ENCODE measurements at regions of chr7 and their contacts with region 1.

Region 1: GRCh38 chr7:86469680-86470295 is 173.9 kb upstream of the GRM3 start:
- DNase-seq: peak in 1 of 2 donors; percentile 19
- ATAC-seq: no peak
- H3K4me3 ChIP-seq: no peak overlapping the region
- H3K27ac ChIP-seq: no peak overlapping the region
- H3K4me1 ChIP-seq: no peaks in the 10 kb centered on the region
- H3K27me3 ChIP-seq: no peaks in the 10 kb centered on the region
- CTCF ChIP-seq: peak; percentile 47

Region 2: DNA sequence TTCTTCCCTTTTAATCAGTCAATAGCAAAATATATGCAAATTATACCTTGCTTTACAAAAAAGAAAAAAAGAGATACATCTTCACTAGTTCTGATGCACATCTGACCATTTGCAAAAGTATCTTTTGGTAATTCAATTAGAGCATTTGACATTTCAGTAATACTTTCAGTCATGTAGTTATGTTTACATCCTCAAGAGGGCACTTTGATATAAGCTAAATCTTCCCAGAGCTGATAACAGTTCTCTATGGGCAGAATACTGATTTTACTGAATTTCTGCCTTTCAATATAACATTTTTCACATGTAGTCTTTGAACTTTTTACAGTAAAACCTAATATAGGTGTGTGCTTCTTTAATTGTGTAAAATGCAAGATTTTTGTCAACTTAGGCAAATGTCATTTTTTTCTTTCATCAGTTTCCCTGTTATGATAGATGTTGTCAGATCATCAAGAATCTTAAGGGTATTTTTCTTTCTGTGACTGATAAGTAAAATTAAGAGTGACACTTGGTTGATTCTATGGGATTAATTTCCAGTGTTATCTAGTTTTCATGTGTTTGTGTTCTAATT is 579.5 kb before region 1 on chr7:
- intact Hi-C with region 1: loop called in 1 of 2 experiments (anchors 10 kb)
- DNase-seq: no peak
- ATAC-seq: no peak
- H3K4me3 ChIP-seq: no peak overlapping the region
- H3K27ac ChIP-seq: no peak overlapping the region
- H3K4me1 ChIP-seq: no peaks in the 10 kb centered on the region
- H3K27me3 ChIP-seq: no peaks in the 10 kb centered on the region
- CTCF ChIP-seq: peak; percentile 30

Measured in psoas muscle (tissue), 8 donors.